Caco-2 (cell line): ENCODE measurements at regions of chr2 and their contacts with region 1.

Region 1: GRCh38 chr2:28392297-28393113 is at the start of gene FOSL2:
- DNase-seq: peak; percentile 98 to 99
- H3K4me3 ChIP-seq: peak within 1 kb of the TSS; percentile 69
- H3K4me3 Mint-ChIP-seq: no peak within 1 kb of the TSS
- H3K27ac Mint-ChIP-seq: peak within 1 kb of the TSS; percentile 95
- H3K4me1 ChIP-seq: peaks cover 36% of the 10 kb centered on the region
- H3K4me1 Mint-ChIP-seq: peaks cover 14% of the 10 kb centered on the region
- H3K27me3 ChIP-seq: no peaks in the 10 kb centered on the region
- H3K27me3 Mint-ChIP-seq: no peaks in the 10 kb centered on the region
- CTCF ChIP-seq: no peak
- total RNA-seq, gene FOSL2: 64.6 and 70.7 TPM in 2 replicates

Region 2: DNA sequence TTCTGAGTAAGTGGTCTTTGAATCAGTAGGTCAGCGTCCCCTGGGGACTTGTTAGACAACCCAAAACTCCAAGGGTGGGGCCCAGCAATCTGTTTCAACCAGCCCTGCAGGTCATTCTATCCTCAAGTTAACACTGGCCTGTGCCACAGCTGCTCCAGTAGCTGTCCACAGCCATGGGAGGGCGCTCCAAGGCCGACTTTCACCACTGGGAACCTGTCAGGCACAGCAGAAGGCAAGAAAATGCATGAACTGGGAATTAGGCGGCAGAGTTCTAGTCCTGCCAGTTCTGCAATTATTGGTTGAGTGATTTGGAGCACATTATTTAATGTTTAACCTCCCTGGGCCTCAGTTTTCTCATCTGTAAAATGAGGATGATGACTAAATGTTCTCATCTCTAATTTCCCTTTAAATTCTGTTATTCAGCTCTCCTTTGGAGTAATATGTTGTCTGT is 638.3 kb before region 1 on chr2:
- CTCF ChIA-PET with region 1: interaction called, 3 read pairs
- POLR2A ChIA-PET with region 1: interaction called, 14 read pairs
- intact Hi-C with region 1: loop called (anchors 2 kb)
- DNase-seq: peak; percentile 91 to 92
- H3K4me3 ChIP-seq: peak overlapping the region; percentile 56
- H3K4me3 Mint-ChIP-seq: peak overlapping the region; percentile 89
- H3K27ac Mint-ChIP-seq: peak overlapping the region; percentile 99
- H3K4me1 ChIP-seq: peaks cover 33% of the 10 kb centered on the region
- H3K4me1 Mint-ChIP-seq: peaks cover 21% of the 10 kb centered on the region
- H3K27me3 ChIP-seq: no peaks in the 10 kb centered on the region
- H3K27me3 Mint-ChIP-seq: no peaks in the 10 kb centered on the region
- CTCF ChIP-seq: peak; percentile 77 to 83

Region 3: DNA sequence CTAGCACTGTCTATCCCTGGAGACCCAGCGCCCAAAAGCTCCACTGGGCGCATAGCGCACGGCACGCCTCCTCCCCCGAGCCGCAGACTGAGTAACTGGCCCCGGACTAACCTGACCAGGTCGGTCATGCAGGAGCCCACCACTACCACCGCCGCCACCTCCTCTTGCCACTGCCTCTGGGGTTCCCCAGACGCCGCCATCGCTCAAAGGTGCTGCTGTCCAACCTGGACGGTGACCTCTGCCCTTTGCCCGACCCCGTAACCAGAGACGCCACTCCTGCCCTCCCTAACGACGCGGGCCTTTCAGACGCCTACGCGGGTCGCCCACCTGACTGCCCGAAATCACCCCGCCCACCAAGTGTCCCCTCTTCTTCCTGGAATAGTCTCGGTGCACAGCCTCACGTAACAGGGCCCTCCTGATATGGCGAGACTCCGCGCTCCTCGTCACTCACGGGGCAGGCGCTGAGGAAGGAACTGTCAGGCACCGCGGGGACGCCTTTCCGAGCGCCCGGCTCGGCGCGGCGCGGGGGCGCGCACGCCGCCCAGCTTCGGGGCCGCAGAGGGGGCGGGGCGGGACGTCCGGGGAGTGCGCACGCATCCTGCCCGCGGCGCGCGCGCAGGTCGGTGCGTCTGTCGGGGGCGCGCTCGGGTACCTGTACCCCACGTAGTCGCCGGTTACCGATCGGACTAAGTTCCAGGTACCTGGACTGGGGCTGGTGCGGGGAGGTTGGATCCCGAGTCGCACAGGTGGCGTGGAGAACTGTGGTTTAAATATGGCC is 502.2 kb before region 1 on chr2 and contains the starts of genes BABAM2 and RBKS:
- CTCF ChIA-PET with region 1: no interaction called
- POLR2A ChIA-PET with region 1: interaction called, 3 read pairs
- intact Hi-C with region 1: loop called (anchors 1 kb)
- DNase-seq: peak; percentile 93 to 94
- H3K4me3 ChIP-seq: peak within 1 kb of the TSS; percentile 63
- H3K4me3 Mint-ChIP-seq: peak within 1 kb of the TSS; percentile 100
- H3K27ac Mint-ChIP-seq: peak within 1 kb of the TSS; percentile 99
- H3K4me1 ChIP-seq: no peaks in the 10 kb centered on the region
- H3K4me1 Mint-ChIP-seq: no peaks in the 10 kb centered on the region
- H3K27me3 ChIP-seq: no peaks in the 10 kb centered on the region
- H3K27me3 Mint-ChIP-seq: no peaks in the 10 kb centered on the region
- CTCF ChIP-seq: no peak
- total RNA-seq, gene BABAM2: 50.7 and 57.3 TPM in 2 replicates
- total RNA-seq, gene RBKS: 7.1 and 7.4 TPM in 2 replicates

Region 4: GRCh38 chr2:28117104-28117596 is 275.4 kb before region 1 on chr2:
- CTCF ChIA-PET with region 1: interaction called, 4 read pairs
- POLR2A ChIA-PET with region 1: interaction called, 7 read pairs
- intact Hi-C with region 1: loop called (anchors 2 kb)
- DNase-seq: peak; percentile 87 to 94
- H3K4me3 ChIP-seq: peak overlapping the region; percentile 29
- H3K4me3 Mint-ChIP-seq: peak overlapping the region; percentile 76
- H3K27ac Mint-ChIP-seq: peak overlapping the region; percentile 90
- H3K4me1 ChIP-seq: peaks cover 44% of the 10 kb centered on the region
- H3K4me1 Mint-ChIP-seq: peaks cover 40% of the 10 kb centered on the region
- H3K27me3 ChIP-seq: no peaks in the 10 kb centered on the region
- H3K27me3 Mint-ChIP-seq: no peaks in the 10 kb centered on the region
- CTCF ChIP-seq: peak in 1 of 2 experiments; percentile 3

Region 5: DNA sequence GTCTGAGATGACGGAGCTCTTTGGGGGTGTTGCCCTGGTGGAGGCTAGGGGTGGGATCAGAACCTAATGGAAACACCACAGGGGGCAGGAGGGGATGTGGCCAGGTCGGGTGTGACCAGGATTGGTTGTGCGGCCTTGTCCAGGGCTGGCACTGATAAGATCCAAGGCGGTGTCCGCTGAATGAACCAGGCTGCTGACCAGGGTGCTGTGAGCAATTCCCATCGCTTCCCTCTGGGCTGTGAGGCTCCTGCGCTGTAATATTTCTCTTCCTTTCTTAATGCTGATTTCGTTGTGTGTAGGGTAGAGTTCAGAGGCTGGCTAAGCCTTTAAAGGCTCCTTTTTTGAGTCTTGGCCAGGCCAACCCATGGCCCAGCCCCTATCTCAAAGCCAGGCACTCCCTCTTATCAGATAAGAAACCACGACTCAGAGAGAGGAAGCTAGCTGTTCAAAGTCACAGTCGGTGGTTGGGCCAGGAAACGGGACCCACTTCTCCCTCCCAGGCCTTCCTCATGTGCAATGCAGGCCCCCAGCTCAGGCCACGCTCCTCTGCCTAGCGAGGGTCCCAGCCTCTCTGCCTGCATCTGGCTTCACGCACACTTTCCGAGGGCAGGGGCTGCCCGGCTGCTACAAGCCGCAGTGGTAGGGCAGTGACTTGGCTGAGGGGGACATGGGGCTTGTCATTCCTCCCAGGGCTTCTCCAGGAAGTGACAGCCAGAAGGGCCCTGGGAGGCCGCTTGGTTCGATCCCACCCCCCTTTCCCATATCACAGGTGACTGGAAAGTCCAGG is 25.8 kb before region 1 on chr2:
- CTCF ChIA-PET with region 1: interaction called, 4 read pairs
- POLR2A ChIA-PET with region 1: no interaction called
- intact Hi-C with region 1: loop called (anchors 2 kb)
- DNase-seq: no peak
- H3K4me3 ChIP-seq: no peak overlapping the region
- H3K4me3 Mint-ChIP-seq: no peak overlapping the region
- H3K27ac Mint-ChIP-seq: peak overlapping the region; percentile 27
- H3K4me1 ChIP-seq: peaks cover 28% of the 10 kb centered on the region
- H3K4me1 Mint-ChIP-seq: peaks cover 21% of the 10 kb centered on the region
- H3K27me3 ChIP-seq: no peaks in the 10 kb centered on the region
- H3K27me3 Mint-ChIP-seq: no peaks in the 10 kb centered on the region
- CTCF ChIP-seq: no peak

Region 6: DNA sequence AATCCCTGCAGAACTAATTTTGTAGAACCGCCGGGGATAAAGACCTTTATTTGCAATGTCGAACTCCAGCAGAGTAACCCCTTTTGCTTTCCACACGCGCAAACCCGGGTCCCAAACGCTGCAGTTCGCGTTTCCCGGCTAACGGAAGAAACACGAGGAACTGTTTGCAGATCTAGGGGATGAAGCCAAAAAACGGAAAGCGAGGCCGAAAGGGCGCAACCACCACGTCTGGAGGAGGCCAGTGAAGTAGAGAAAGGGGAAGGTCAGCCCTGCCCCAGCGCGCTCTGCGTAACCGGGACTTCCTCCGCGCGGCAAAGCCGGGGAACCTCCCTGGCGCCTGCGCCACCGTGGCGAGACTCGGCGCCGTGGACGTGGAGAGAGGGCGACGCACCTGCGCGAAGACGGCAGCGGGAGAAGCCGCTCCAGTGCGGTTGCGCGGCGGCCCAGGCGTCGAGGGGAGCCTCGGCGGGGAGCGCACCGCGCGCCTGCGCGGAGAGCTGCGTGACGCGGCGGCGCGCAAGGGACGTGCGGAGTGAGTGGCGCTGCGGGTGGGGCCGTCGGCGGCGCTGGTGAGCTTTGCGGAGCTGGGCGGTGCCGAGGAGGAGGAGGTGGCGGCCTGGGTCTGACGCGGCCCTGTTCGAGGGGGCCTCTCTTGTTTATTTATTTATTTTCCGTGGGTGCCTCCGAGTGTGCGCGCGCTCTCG is 358.9 kb after region 1 on chr2 and contains the start of gene PPP1CB:
- CTCF ChIA-PET with region 1: no interaction called
- POLR2A ChIA-PET with region 1: no interaction called
- intact Hi-C with region 1: loop called (anchors 10 kb)
- DNase-seq: peak; percentile 96 to 97
- H3K4me3 ChIP-seq: peak within 1 kb of the TSS; percentile 89
- H3K4me3 Mint-ChIP-seq: peak within 1 kb of the TSS; percentile 97
- H3K27ac Mint-ChIP-seq: peak within 1 kb of the TSS; percentile 99
- H3K4me1 ChIP-seq: peaks cover 15% of the 10 kb centered on the region
- H3K4me1 Mint-ChIP-seq: peaks cover 31% of the 10 kb centered on the region
- H3K27me3 ChIP-seq: no peaks in the 10 kb centered on the region
- H3K27me3 Mint-ChIP-seq: no peaks in the 10 kb centered on the region
- CTCF ChIP-seq: peak in 1 of 2 experiments; percentile 43
- total RNA-seq, gene PPP1CB: 185 and 190 TPM in 2 replicates